Dendritic cell treated with granulocyte-macrophage colony-stimulating factor and Interleukin-4, amounts not matched to agents 40 ng/mL and 50 ng/mL, for 4 days (primary cell): ENCODE measurements at regions of chr5 and their contacts with region 1.

Region 1: GRCh38 chr5:54243473-54244080 is 66.8 kb downstream of the ARL15 start:
- H3K4me3 Mint-ChIP-seq: no peak overlapping the region
- H3K27ac Mint-ChIP-seq: no peak overlapping the region
- H3K4me1 Mint-ChIP-seq: no peaks in the 10 kb centered on the region
- H3K27me3 Mint-ChIP-seq: no peaks in the 10 kb centered on the region

Region 2: DNA sequence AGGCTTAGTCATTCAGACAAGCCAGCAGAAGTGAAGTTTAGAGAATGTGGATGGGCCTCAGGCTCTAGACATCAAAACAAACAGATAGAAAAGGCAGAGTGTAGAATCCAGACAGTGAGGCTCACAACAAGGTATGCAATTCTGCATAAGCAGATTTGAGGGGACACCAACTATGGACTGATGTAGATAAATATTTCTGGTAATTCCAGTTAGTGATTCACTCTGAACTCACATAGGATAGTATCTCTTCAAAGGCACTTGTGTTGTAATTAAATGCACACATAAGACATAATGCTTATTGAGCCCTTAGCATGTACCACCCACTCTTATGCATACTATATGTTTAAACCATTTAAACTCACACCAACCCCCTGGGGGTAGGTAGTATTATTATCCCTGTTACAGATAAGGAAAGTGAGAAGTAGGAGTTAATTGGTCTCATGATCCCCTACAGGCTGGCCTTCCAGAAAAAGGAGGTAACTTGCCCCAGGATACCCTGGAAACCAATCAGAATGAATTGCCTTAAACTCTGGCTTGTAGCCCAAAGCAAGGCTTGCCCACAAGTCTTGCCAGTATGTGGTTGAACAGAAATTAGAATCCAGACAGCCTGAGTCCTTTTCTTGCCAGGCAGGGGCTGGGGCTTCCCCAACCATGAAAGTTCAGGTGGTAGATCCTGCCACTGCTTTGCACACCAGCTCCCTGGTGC is 172.5 kb after region 1 on chr5:
- intact Hi-C with region 1: loop called (anchors 1 kb)
- H3K4me3 Mint-ChIP-seq: no peak overlapping the region
- H3K27ac Mint-ChIP-seq: no peak overlapping the region
- H3K4me1 Mint-ChIP-seq: no peaks in the 10 kb centered on the region
- H3K27me3 Mint-ChIP-seq: peaks cover 3% of the 10 kb centered on the region

Region 3: DNA sequence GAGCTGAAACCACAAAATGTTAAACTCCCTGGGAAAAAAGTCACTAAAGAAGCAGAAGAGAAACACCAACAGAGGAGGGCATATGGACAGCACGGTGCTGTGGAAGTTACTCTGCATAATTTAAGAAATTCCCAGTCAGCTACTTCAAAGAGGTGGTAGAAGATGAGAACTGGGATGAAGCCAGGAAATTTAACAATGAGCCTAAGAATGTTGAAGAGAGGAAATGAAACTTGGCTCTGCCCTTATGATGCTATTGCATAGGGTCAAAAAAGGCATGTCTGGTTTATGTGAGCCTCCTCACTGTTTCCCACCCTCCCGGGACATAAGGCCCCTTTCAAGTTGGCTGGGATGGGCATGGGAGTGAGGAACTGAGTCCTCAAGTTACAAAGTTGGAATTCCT is 248.6 kb after region 1 on chr5:
- intact Hi-C with region 1: loop called (anchors 2 kb)
- H3K4me3 Mint-ChIP-seq: no peak overlapping the region
- H3K27ac Mint-ChIP-seq: peak overlapping the region; percentile 28
- H3K4me1 Mint-ChIP-seq: peaks cover 13% of the 10 kb centered on the region
- H3K27me3 Mint-ChIP-seq: peaks cover 11% of the 10 kb centered on the region

Region 4: DNA sequence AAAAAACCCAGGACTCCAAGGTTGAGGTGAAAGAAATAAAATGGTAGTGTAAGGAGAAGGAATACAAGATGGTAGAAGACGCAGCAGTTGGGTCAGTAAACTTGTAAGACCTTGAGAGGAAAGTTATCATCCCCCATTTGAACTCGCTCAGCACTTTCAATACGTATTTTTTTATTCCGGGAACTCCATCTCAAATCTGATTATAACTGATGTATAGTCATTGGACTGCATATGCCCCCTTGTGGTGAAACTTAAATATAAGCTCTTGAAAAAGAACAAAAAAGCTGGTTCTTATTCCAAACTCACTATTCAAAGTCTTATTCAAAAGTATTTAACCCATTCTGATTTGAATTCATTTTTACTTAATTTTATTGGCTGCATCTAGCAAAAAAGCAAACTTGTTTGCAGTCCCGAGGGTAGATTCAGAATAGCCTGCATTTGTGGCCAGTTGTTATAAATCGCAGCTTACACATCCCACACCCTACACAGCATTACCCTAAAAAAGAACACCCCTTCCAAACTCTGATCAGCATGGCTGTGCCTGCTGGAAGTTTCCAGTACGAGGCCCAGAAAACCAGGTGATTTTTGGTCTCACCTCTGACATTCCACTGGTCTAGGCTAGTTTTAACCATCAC is 623.9 kb after region 1 on chr5:
- intact Hi-C with region 1: loop called (anchors 10 kb)
- H3K4me3 Mint-ChIP-seq: peak overlapping the region; percentile 36
- H3K27ac Mint-ChIP-seq: no peak overlapping the region
- H3K4me1 Mint-ChIP-seq: peaks cover 5% of the 10 kb centered on the region
- H3K27me3 Mint-ChIP-seq: peaks cover 11% of the 10 kb centered on the region

Region 5: DNA sequence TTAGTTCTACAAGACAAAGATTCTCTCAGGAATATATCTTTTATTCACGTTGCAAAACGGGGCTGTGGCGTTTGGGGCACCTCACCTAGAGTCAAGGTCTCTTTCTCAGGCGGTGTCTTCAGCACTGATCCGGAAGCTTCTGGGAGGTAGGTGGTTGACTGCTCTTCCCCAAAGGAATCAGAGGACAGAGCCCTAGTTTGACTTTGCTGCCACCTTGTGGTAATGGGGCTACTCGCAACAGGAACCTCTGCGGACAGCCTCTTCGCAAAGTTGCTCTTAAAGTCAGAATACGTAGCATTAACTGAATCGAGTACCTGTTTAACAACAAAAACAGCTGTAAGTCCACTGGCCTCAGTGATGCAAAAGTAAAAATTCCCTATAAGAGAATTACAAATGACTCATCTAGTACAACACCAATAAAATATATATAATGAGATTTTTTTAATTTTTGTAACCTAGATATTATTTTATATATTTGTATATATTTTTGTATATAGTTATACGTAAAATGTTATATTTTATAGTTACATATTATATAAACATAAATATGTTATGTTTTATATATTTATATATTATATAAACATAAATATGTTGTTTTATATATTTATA is 903.1 kb after region 1 on chr5:
- intact Hi-C with region 1: loop called (anchors 10 kb)
- H3K4me3 Mint-ChIP-seq: no peak overlapping the region
- H3K27ac Mint-ChIP-seq: no peak overlapping the region
- H3K4me1 Mint-ChIP-seq: peaks cover 5% of the 10 kb centered on the region
- H3K27me3 Mint-ChIP-seq: peaks cover 18% of the 10 kb centered on the region